Activated CD4-positive, alpha-beta memory T cell treated with anti-CD3 and anti-CD28 coated beads, Interleukin-2, amount 10 ng/mL, durations not matched to agents 7 days and 5 days (primary cell): ENCODE measurements at regions of chr1 and their contacts with region 1.

Region 1: DNA sequence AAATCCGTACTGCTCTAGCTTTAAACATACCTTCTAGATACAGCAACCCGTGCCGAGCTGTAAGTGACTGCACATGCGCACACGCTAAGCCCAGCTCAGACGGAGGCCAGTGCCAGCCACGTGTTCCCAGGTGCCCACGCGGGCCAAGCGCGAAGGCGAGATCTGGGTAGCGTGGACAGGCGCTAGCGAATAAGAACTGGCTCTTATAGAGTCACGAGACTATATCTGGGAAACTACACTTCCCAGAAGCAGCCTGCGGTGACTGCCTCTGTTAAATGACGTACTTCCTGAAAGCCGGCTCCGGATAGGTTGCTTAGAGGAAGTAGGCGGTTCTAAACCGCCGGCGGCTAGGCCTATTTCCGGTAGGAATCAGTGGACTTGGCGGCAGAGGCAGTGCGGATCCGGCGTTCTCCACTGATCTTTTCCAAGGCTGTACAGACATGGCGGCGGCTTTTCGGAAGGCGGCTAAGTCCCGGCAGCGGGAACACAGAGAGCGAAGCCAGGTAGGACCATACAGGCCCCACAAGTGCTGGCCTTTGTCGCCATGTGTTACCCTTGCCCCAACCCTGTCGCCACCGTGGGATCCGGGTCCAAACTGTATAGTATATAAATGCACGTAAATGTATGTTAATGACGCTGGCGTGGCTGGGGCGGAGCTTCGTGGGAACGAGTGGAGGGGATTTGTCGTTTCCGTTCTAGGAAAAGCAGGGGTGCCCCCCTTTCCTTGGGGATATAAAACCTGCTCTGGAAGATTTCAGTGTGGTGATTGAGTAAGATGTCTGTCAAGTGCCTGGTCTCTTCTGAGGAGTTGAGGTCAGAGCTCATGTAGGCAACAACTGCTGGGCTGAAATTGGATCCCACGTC is at the start of gene UTP11:
- DNase-seq: peak; percentile 94
- H3K4me3 Mint-ChIP-seq: peak within 1 kb of the TSS; percentile 98
- H3K27ac Mint-ChIP-seq: peak within 1 kb of the TSS; percentile 95
- H3K4me1 Mint-ChIP-seq: peaks cover 62% of the 10 kb centered on the region
- H3K27me3 Mint-ChIP-seq: no peaks in the 10 kb centered on the region
- total RNA-seq, gene UTP11: 29.1 to 33.2 TPM

Region 2: DNA sequence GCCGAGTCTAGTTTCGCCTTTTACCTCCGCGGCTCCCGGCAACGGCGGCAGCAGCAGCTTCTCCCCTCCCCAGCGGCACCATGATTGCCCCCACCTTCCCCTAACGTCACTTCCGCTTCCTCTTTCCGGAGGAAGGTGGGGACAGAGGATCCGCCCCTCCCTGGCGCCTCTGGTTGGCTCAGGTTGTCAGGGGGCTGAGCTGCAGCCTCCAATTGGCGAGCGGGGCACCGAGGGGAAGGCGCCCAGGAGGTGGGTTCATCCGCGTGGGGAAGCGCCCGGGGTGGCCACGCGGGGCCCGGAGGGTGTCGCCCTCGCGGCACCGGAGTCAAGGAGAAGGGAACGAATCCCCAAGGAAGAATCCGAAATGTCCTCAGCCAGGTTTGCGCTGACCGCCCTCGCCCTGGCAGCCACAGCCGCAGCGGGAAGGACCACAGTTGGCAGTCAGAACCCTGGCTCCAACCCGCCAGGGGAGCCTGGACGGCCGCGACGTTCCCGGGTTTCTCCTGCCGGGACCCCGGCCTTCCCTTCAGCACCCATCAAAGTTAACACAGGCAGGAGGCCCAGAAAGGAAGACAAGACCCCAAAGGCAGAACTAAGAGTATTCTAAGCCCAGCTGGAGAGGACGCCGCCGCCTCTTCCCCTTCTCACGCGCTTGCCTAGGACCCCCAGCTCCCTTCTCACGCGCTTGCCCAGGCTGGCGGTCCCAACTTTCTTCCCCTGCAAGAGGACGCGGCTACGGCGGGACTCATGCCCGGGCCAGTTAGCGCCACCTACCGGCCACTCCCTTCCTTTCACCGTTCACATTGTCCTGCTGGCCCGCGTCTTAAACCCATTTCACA is 152.9 kb before region 1 on chr1 and contains the start of gene MTF1:
- CTCF ChIA-PET with region 1: interaction called, 5 read pairs
- POLR2A ChIA-PET with region 1: interaction called, 10 read pairs
- DNase-seq: peak; percentile 97
- H3K4me3 Mint-ChIP-seq: peak within 1 kb of the TSS; percentile 100
- H3K27ac Mint-ChIP-seq: peak within 1 kb of the TSS; percentile 99
- H3K4me1 Mint-ChIP-seq: peaks cover 45% of the 10 kb centered on the region
- H3K27me3 Mint-ChIP-seq: no peaks in the 10 kb centered on the region
- total RNA-seq, gene MTF1: 27.5 to 28.8 TPM

Region 3: GRCh38 chr1:37989361-37989930 is 23.1 kb before region 1 on chr1:
- CTCF ChIA-PET with region 1: interaction called, 39 read pairs
- POLR2A ChIA-PET with region 1: interaction called, 28 read pairs
- DNase-seq: peak; percentile 53
- H3K4me3 Mint-ChIP-seq: peak overlapping the region; percentile 89
- H3K27ac Mint-ChIP-seq: peak overlapping the region; percentile 87
- H3K4me1 Mint-ChIP-seq: peaks cover 23% of the 10 kb centered on the region
- H3K27me3 Mint-ChIP-seq: no peaks in the 10 kb centered on the region

Region 4: GRCh38 chr1:37995751-37996345 is 16.7 kb before region 1 on chr1:
- CTCF ChIA-PET with region 1: interaction called, 39 read pairs
- POLR2A ChIA-PET with region 1: interaction called, 28 read pairs
- DNase-seq: no peak
- H3K4me3 Mint-ChIP-seq: peak overlapping the region; percentile 30
- H3K27ac Mint-ChIP-seq: no peak overlapping the region
- H3K4me1 Mint-ChIP-seq: peaks cover 35% of the 10 kb centered on the region
- H3K27me3 Mint-ChIP-seq: no peaks in the 10 kb centered on the region

Region 5: DNA sequence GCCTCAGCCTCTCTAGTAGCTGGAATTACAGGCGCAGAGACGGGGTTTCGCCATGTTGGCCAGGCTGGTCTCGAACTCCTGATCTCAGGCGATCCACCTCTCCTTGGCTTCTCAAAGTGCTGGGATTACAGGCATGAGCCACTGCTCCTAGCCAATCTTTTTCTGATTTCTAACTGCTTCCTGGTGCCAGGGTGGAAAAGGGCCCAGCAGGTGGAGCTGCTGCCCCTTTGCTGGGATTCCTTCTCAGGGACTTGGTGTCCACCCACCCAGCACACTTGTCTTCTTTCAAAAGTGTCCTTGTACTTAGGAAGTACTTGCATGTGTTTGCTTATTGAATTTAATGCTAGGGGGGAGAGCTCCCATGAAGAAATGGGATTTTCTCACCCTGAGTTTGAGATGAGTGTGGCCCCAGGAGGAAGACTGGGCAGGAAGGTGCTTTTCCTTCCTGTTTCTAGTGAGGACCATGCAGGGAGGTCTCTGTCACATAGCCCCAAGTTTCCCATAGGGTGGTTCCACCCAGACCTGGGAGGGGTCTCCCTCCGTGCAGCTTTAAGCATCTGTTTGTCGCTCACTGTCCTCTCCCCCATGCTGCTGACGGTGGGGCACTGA is 14.1 kb after region 1 on chr1:
- CTCF ChIA-PET with region 1: interaction called, 29 read pairs
- POLR2A ChIA-PET with region 1: interaction called, 12 read pairs
- DNase-seq: peak; percentile 54
- H3K4me3 Mint-ChIP-seq: no peak overlapping the region
- H3K27ac Mint-ChIP-seq: no peak overlapping the region
- H3K4me1 Mint-ChIP-seq: peaks cover 55% of the 10 kb centered on the region
- H3K27me3 Mint-ChIP-seq: no peaks in the 10 kb centered on the region

Region 6: GRCh38 chr1:38038861-38039260 is 26.3 kb after region 1 on chr1:
- CTCF ChIA-PET with region 1: no interaction called
- POLR2A ChIA-PET with region 1: no interaction called
- DNase-seq: no peak
- H3K4me3 Mint-ChIP-seq: no peak overlapping the region
- H3K27ac Mint-ChIP-seq: no peak overlapping the region
- H3K4me1 Mint-ChIP-seq: peaks cover 4% of the 10 kb centered on the region
- H3K27me3 Mint-ChIP-seq: peaks cover 25% of the 10 kb centered on the region